ENCODE measurements at regions of chr4 and their contacts with region 1.

Region 1: DNA sequence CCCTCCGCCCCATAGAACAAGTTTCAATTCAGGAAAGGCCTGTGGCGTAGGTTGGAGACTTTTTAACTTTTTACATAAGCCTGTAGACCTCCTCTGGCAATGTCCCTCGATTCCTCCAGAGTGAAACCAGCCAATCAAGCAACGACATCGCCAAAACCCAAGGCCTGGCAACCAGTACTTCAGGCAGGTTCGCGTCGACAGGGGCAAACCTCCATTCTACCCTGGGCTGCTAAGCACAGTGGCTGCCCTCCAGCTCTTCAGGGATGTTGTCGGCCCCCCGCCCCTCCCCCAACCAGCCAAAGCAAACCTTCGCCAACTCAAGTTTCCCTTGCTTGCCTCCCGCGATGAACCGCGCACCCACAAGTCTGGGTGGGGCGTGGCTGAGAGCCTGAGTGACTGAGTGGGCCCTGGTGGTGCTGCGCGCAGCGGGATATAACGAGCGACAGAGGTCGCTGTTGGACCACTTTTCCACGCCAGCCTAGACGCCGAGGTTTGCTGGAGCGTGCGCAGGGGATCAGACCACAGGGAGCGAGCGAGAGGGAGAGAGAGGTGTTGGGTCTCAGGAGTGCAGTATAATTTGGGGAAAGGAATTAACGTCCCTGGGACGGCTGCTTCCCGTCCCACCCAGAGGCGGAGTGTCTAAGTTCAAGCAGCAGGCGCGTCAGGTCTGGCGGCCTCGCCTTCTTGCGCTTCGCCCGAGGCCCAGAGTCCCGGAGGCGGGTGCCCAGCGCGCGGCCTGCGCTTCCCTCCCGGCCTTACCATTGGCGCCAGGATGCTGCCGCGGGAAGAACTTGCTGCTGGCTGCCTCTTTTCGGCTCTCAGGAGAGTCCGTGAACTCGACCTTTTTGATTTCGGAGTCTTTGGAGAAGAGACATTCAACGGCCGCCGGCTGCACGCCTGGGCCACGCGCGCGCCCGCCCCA is 9.0 kb upstream of the PITX2 start:
- DNase-seq: peak; percentile 66
- ATAC-seq: peak; percentile 95

Region 2: GRCh38 chr4:110533940-110534339 is 97.9 kb before region 1 on chr4:
- intact Hi-C with region 1: no loop called
- DNase-seq: no peak
- ATAC-seq: no peak

Region 3: GRCh38 chr4:110886270-110886669 is 254.4 kb after region 1 on chr4:
- intact Hi-C with region 1: no loop called
- DNase-seq: no peak
- ATAC-seq: no peak

Region 4: DNA sequence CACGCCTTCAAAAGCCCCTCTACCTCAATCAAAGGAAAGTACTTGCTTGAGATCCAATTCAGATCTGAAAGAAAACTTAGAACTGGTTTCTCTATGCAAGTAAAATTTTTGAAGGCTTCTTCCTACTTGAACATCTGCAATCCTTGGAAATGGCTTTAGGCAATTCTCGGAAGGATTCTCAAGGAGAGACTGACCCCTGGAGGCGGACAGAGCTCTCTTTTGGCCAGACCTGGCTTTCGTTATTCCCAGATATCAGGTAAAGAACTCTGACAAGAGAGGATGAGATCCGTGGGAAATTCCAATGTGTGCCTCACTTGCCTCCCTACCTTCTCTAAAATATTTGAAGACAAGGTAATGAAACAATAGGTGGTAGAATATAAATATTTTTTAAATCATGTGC is 843.2 kb after region 1 on chr4:
- intact Hi-C with region 1: loop called (anchors 10 kb)
- DNase-seq: no peak
- ATAC-seq: peak; percentile 58